ENCODE measurements at regions of chr3 and their contacts with region 1.

Region 1: GRCh38 chr3:169812332-169813235 is at the starts of genes LRRC34 and LRRIQ4:
- DNase-seq: peak; percentile 64
- H3K4me3 Mint-ChIP-seq: peak within 1 kb of the TSS; percentile 83
- H3K27ac Mint-ChIP-seq: peak within 1 kb of the TSS; percentile 89
- H3K4me1 Mint-ChIP-seq: peaks cover 49% of the 10 kb centered on the region
- H3K27me3 Mint-ChIP-seq: peaks cover 6% of the 10 kb centered on the region
- total RNA-seq, gene LRRC34: 2.8 and 2.9 TPM in 2 replicates
- total RNA-seq, gene LRRIQ4: 0.10 and 0.12 TPM in 2 replicates

Region 2: GRCh38 chr3:169772897-169773828 is 39.4 kb before region 1 on chr3 and contains the start of gene MYNN:
- intact Hi-C with region 1: loop called (anchors 1 kb)
- DNase-seq: peak; percentile 91
- H3K4me3 Mint-ChIP-seq: peak within 1 kb of the TSS; percentile 97
- H3K27ac Mint-ChIP-seq: peak within 1 kb of the TSS; percentile 99
- H3K4me1 Mint-ChIP-seq: peaks cover 56% of the 10 kb centered on the region
- H3K27me3 Mint-ChIP-seq: peaks cover 5% of the 10 kb centered on the region
- total RNA-seq, gene MYNN: 14.5 and 16.8 TPM in 2 replicates

Region 3: GRCh38 chr3:169792359-169792758 is 20.2 kb before region 1 on chr3:
- intact Hi-C with region 1: loop called (anchors 2 kb)
- DNase-seq: no peak
- H3K4me3 Mint-ChIP-seq: no peak overlapping the region
- H3K27ac Mint-ChIP-seq: no peak overlapping the region
- H3K4me1 Mint-ChIP-seq: peaks cover 12% of the 10 kb centered on the region
- H3K27me3 Mint-ChIP-seq: no peaks in the 10 kb centered on the region

Region 4: DNA sequence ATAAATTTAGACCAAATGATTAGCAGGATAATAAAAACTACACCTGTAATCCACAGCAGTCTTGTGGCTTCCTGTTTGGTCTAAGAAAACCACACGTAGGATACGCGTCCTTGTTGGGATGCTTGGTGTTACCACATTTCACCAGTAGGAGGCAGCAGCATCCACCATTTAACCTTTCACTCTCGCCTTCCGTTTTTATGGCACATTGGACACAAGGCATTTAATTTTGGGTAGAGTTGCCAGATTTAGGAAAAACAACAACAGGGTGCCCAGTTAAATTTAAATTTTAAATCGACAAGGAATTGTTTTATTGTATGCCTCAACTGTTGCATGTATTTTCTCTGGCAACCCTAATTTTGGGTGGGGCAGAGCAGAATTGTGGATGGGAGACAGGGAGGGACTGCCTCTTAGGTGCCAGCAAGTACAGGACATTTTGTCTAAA is 50.9 kb after region 1 on chr3:
- intact Hi-C with region 1: loop called (anchors 1 kb)
- DNase-seq: peak; percentile 44
- H3K4me3 Mint-ChIP-seq: no peak overlapping the region
- H3K27ac Mint-ChIP-seq: no peak overlapping the region
- H3K4me1 Mint-ChIP-seq: peaks cover 24% of the 10 kb centered on the region
- H3K27me3 Mint-ChIP-seq: peaks cover 25% of the 10 kb centered on the region

Region 5: DNA sequence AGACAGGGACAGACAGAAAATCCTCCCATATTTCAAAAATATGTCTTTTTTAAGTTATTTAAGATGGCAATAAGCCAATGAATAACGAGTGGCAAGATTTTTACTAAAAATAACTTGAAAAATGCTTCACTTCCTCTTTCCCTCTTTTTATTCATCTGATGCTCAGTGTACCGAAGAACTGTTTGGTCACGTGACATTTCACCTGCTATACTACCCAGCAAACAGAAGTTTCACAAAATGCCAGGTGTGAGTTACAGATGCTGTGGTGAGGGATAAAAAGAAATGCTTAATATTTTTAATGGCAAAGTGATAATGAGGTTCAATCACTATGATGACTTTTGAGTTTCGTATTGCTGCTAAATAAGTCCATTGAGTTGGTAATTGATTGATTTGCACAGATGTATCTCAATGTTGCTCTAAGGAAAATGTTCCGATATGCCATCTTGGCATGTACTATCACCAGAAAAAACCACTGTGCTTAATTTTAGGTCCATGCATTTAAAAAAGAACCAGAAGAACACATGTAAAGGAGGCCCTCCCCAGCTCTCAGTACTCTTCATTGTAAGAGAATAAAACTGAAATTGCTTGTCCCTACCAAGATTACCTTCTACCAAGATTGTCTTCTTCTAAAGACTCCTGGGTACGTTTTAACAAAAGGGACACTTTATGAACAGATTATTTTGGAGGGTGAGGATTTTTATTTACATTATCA is 128.0 kb after region 1 on chr3:
- intact Hi-C with region 1: no loop called
- DNase-seq: no peak
- H3K4me3 Mint-ChIP-seq: no peak overlapping the region
- H3K27ac Mint-ChIP-seq: no peak overlapping the region
- H3K4me1 Mint-ChIP-seq: peaks cover 15% of the 10 kb centered on the region
- H3K27me3 Mint-ChIP-seq: peaks cover 12% of the 10 kb centered on the region

Region 6: GRCh38 chr3:170055209-170055608 is 242.6 kb after region 1 on chr3:
- intact Hi-C with region 1: loop called (anchors 5 kb)
- DNase-seq: no peak
- H3K4me3 Mint-ChIP-seq: no peak overlapping the region
- H3K27ac Mint-ChIP-seq: no peak overlapping the region
- H3K4me1 Mint-ChIP-seq: peaks cover 43% of the 10 kb centered on the region
- H3K27me3 Mint-ChIP-seq: no peaks in the 10 kb centered on the region

Measured in activated T-helper 1 cell treated with anti-CD3 and anti-CD28 coated beads, Interleukin-12 subunit alpha, Interleukin-12 subunit beta, Interleukin-2, Interleukin-4 antibody, amounts not matched to agents 30 ng/mL and 10 ng/mL and 1 ng/mL, durations not matched to agents 14 hours and 24 hours and 36 hours (primary cell).